Activated B cell treated with CpG ODN at 0.5 μM for 24 hours (primary cell): ENCODE measurements at regions of chr18 and their contacts with region 1.

Region 1: DNA sequence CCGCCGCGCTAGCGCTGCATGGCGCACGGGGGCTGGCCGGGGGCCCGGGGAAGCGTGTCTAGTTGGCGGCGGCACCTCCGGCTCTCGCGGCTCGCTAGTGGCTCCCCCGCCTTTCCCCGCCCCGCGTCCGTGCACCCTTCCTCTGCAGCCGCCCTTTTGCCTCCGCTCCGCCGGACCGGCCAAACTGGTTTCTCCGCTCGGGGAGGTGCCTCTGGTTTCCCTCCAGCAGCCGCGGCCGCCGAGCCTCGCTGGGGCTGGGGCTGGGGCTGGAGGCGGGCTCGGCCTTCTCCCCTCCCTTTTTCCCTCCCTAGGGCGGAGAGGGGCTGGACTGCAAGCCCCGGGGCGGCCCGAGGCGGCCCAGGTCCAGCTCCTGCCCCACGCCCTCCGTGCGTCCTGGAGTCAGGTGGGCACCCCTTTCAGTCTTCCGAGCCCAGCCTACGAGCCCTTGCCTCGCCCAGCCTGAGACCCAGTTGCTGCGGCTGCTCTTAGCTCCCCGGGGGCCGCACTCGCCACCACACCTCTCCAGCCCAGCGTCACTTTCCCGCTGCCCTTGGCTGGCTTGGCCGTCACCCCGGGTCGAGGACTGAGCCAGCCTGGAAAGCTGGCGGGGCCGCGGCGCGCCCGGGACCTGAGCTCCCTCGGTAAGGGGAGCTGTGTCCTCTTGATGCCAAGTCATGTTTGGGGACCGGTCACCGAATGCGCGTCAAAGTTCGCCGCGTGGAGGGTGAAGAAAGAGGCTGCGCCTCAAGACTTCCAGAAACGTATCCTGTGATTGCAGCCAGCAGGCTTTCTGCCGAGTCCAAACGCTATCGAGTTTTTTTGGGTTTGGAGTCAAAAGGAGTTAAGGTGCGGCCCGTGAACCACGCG is at the start of gene ATP8B1:
- DNase-seq: peak; percentile 29
- ATAC-seq: peak; percentile 78
- H3K4me3 Mint-ChIP-seq: peak within 1 kb of the TSS; percentile 85
- H3K27ac Mint-ChIP-seq: no peak within 1 kb of the TSS
- H3K4me1 Mint-ChIP-seq: peaks cover 24% of the 10 kb centered on the region
- H3K27me3 Mint-ChIP-seq: peaks cover 31% of the 10 kb centered on the region
- CTCF ChIP-seq: no peak
- total RNA-seq, gene ATP8B1: 0.42 and 0.69 TPM in 2 replicates

Region 2: GRCh38 chr18:57595347-57595746 is 208.0 kb before region 1 on chr18:
- CTCF ChIA-PET with region 1: no interaction called
- POLR2A ChIA-PET with region 1: no interaction called
- intact Hi-C with region 1: no loop called
- DNase-seq: no peak
- ATAC-seq: no peak
- H3K4me3 Mint-ChIP-seq: no peak overlapping the region
- H3K27ac Mint-ChIP-seq: no peak overlapping the region
- H3K4me1 Mint-ChIP-seq: no peaks in the 10 kb centered on the region
- H3K27me3 Mint-ChIP-seq: no peaks in the 10 kb centered on the region
- CTCF ChIP-seq: no peak

Region 3: GRCh38 chr18:57859314-57859713 is 56.0 kb after region 1 on chr18:
- CTCF ChIA-PET with region 1: no interaction called
- POLR2A ChIA-PET with region 1: no interaction called
- intact Hi-C with region 1: loop called (anchors 2 kb)
- DNase-seq: no peak
- ATAC-seq: peak; percentile 54
- H3K4me3 Mint-ChIP-seq: no peak overlapping the region
- H3K27ac Mint-ChIP-seq: no peak overlapping the region
- H3K4me1 Mint-ChIP-seq: no peaks in the 10 kb centered on the region
- H3K27me3 Mint-ChIP-seq: peaks cover 2% of the 10 kb centered on the region
- CTCF ChIP-seq: no peak

Region 4: DNA sequence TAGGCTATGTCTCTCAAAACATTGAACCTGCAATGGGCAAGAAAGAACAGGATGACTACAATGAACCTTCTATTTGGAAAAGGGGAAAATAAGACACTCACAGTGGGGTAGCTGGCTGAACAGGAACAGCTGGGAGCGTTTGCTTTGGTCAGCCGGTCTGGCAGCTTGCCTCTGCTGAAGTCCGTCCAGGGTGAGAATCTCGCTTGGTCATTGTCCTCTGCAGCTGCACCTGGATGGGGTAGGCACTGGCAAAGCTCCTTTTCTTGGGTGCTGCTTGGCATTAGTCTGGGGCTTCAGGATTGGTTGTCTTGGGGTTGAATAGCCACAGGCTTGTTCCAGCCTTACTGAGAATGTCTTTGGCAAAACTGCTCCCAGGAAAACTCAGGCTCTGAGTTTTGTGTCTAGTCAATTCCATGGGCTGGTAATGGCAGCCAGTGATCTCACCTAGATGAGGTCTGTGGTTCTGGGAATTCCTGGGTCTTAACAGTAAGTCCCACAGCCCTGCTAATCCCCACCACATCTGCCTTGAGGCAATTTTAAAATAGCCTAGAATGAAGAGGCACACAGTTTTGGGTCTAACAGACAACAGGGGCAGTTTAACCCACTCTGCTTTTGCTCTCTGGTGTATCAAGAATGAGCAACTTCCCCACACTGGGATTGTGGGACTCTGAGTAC is 254.1 kb after region 1 on chr18:
- CTCF ChIA-PET with region 1: no interaction called
- POLR2A ChIA-PET with region 1: no interaction called
- intact Hi-C with region 1: no loop called
- DNase-seq: no peak
- ATAC-seq: no peak
- H3K4me3 Mint-ChIP-seq: no peak overlapping the region
- H3K27ac Mint-ChIP-seq: no peak overlapping the region
- H3K4me1 Mint-ChIP-seq: no peaks in the 10 kb centered on the region
- H3K27me3 Mint-ChIP-seq: no peaks in the 10 kb centered on the region
- CTCF ChIP-seq: no peak